ENCODE measurements at regions of chr22 and their contacts with region 1.

Region 1: DNA sequence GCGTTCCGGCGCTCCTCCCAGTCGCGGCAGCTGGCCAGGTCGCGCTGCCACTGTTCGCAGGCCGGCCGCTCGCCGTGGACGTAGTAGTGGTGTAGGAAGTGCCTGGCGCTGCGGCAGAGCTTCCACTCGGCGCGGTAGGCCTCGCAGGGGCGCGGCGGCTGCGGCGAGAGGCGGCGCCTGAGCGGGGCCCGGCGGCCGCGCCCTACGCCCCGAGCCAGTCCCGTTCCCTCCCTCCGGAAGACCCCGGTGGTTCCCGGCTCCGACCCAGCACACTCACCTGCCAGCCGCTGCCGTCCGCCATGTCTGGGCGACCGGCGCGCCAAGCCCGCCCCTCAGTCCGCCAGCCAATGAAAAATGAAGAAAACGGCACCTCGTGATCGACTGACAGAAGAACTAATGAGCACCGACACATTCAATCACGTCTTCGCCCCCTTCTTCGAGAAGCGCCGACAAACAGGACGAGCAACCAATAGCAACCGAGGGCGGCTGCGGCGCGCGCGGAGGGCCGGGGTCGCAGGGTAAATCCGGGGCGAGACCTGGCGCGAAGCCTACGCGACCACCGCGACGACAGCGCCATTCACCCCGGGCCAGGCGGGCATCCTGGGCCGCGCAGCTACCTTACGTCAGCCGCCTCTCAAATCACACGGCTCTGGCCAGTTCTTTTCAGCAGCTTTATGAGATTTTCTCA is at the start of gene C22orf39:
- DNase-seq: peak; percentile 92 to 96
- H3K4me3 ChIP-seq: peak within 1 kb of the TSS; percentile 55
- H3K4me1 ChIP-seq: peaks cover 20% of the 10 kb centered on the region
- H3K27me3 ChIP-seq: no peaks in the 10 kb centered on the region

Region 2: GRCh38 chr22:19854778-19855503 is 407.4 kb after region 1 on chr22 and contains the starts of genes GNB1L and RTL10:
- in situ Hi-C with region 1: loop called (anchors 25 kb)
- DNase-seq: peak; percentile 95 to 97
- H3K4me3 ChIP-seq: peak within 1 kb of the TSS; percentile 83
- H3K4me1 ChIP-seq: peaks cover 12% of the 10 kb centered on the region
- H3K27me3 ChIP-seq: no peaks in the 10 kb centered on the region

Measured in HAP-1 (cell line).